Pancreas (tissue), 10 donors: ENCODE measurements at regions of chr9 and their contacts with region 1.

Region 1: DNA sequence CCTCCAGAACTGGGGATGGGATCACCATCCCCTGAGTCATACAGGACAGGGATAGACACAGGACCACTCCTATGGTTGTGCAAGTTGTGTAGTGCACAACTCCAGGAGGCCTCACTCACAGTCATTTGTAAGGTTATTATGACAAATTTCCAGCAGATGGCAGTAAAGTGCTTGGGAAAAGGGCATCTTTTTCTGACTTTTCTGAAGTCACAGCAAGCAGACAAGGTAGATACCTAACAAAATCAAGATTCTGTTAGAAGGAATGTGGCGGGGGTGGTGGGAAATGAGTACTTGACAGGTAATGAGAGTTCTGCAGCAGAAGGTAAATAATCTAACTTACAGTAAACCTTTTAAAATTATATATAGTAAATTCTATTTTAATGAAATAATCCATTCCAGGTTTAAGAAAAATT is 16.7 kb upstream of the KIF27 start:
- DNase-seq: peak in 1 of 6 donors; percentile 32
- ATAC-seq: peak; percentile 37 to 76 (median 70)
- H3K4me3 ChIP-seq: no peak overlapping the region
- H3K27ac ChIP-seq: no peak overlapping the region
- H3K4me1 ChIP-seq: peaks cover 0 to 17% (median 6%) of the 10 kb centered on the region in 3 donors
- H3K27me3 ChIP-seq: no peaks in the 10 kb centered on the region
- CTCF ChIP-seq: peak; percentile 36 to 57 (median 45)

Region 2: GRCh38 chr9:84002344-84002743 is 64.4 kb after region 1 on chr9:
- intact Hi-C with region 1: no loop called
- DNase-seq: no peak
- ATAC-seq: peak in 1 of 4 donors; percentile 61
- H3K4me3 ChIP-seq: no peak overlapping the region
- H3K27ac ChIP-seq: no peak overlapping the region
- H3K4me1 ChIP-seq: peaks cover 6 to 9% (median 8%) of the 10 kb centered on the region in 3 donors
- H3K27me3 ChIP-seq: no peaks in the 10 kb centered on the region
- CTCF ChIP-seq: no peak

Region 3: GRCh38 chr9:84170521-84171141 is 232.7 kb after region 1 on chr9:
- intact Hi-C with region 1: loop called in 2 of 3 experiments (anchors 5 to 10 kb)
- DNase-seq: peak; percentile 56 to 81 (median 77)
- ATAC-seq: peak; percentile 89 to 95 (median 90)
- H3K4me3 ChIP-seq: no peak overlapping the region
- H3K27ac ChIP-seq: peak overlapping the region; percentile 45 to 68 (median 60)
- H3K4me1 ChIP-seq: no peaks in the 10 kb centered on the region
- H3K27me3 ChIP-seq: no peaks in the 10 kb centered on the region
- CTCF ChIP-seq: no peak

Region 4: DNA sequence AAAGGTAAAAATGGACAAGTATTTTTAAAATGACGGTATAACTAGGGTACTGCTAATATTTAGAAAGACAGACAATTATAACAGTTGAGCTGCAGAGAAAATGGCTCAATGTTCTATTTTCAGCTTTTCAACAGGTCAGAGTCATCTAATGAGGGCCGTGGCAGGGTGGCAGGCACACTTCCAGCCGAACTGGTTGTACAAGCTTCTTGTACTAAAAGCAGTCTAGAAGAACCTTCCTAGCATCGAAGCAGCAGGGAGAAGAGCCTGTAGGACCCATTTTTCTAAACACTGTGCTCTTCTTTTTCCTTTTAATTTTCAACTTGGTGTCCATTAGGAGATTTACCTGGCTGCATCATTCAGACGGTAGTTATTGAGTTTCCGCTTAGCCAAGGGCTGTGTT is 317.1 kb after region 1 on chr9:
- intact Hi-C with region 1: loop called (anchors 5 to 10 kb)
- DNase-seq: peak in 4 of 6 donors; percentile 25 to 40 (median 32)
- ATAC-seq: peak in 3 of 4 donors; percentile 60 to 75 (median 74)
- H3K4me3 ChIP-seq: no peak overlapping the region
- H3K27ac ChIP-seq: peak overlapping the region in 1 of 4 donors; percentile 21
- H3K4me1 ChIP-seq: no peaks in the 10 kb centered on the region
- H3K27me3 ChIP-seq: no peaks in the 10 kb centered on the region
- CTCF ChIP-seq: no peak

Region 5: DNA sequence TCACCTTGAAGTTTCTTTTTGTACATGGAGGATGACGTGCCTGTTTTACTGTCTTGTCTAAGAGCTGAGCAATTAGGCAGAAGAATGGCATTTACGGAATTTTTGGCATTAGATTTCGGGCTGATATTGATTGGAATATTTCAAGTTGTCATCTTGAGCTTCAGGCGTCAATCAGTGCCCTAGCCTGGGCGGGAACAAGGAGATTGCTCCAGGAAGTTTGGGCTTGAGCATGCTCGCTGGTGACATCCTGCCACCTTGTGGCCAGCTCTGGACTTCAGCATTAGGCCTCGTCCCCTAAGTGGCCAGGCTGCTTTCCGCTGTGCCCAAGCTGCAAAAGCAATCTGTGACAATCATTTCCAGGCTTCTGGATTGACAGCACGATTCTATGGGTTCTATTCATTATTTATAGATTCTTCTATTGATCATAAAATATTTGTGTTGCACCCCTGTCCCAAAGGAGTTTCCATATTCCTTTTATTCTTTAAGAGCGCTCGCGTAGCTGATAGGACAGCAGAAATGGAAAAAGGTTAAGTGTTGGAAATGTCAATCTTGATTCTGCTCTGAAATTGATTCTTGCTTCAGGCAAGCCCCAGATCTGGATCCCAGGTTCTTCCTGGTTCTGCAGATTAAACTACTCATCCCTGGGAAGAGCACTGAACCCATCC is 323.3 kb after region 1 on chr9:
- intact Hi-C with region 1: loop called (anchors 5 to 10 kb)
- DNase-seq: peak; percentile 56 to 88 (median 80)
- ATAC-seq: peak; percentile 94 to 100 (median 98)
- H3K4me3 ChIP-seq: peak overlapping the region in 1 of 4 donors; percentile 29
- H3K27ac ChIP-seq: no peak overlapping the region
- H3K4me1 ChIP-seq: no peaks in the 10 kb centered on the region
- H3K27me3 ChIP-seq: no peaks in the 10 kb centered on the region
- CTCF ChIP-seq: peak; percentile 72 to 90 (median 86)